Activated T-helper 2 cell treated with anti-CD3 and anti-CD28 coated beads, Interferon-gamma antibody, Interleukin-2, Interleukin-4, amounts not matched to agents 10 μg/mL and 5 μg/mL and 100 μg/mL, durations not matched to agents 14 hours and 24 hours and 36 hours (primary cell): ENCODE measurements at regions of chr1 and their contacts with region 1.

Region 1: GRCh38 chr1:205273551-205273982 is 45.8 kb downstream of the TMCC2 start:
- DNase-seq: peak; percentile 73
- H3K4me3 Mint-ChIP-seq: no peak overlapping the region
- H3K27ac Mint-ChIP-seq: no peak overlapping the region
- H3K4me1 Mint-ChIP-seq: peaks cover 14% of the 10 kb centered on the region
- H3K27me3 Mint-ChIP-seq: peaks cover 4% of the 10 kb centered on the region

Region 2: GRCh38 chr1:205284343-205285144 is 11.0 kb after region 1 on chr1:
- intact Hi-C with region 1: loop called (anchors 1 kb)
- DNase-seq: peak; percentile 86
- H3K4me3 Mint-ChIP-seq: no peak overlapping the region
- H3K27ac Mint-ChIP-seq: peak overlapping the region; percentile 85
- H3K4me1 Mint-ChIP-seq: peaks cover 69% of the 10 kb centered on the region
- H3K27me3 Mint-ChIP-seq: peaks cover 13% of the 10 kb centered on the region